Right lobe of liver (tissue), 6 donors: ENCODE measurements at regions of chr3 and their contacts with region 1.

Region 1: GRCh38 chr3:61947456-61947855 is 386.1 kb downstream of the PTPRG start:
- DNase-seq: no peak
- ATAC-seq: no peak
- H3K4me3 ChIP-seq: no peak overlapping the region
- H3K27ac ChIP-seq: no peak overlapping the region
- H3K4me1 ChIP-seq: no peaks in the 10 kb centered on the region
- H3K27me3 ChIP-seq: no peaks in the 10 kb centered on the region
- CTCF ChIP-seq: no peak
- POLR2A ChIP-seq: no peak

Region 2: GRCh38 chr3:61894988-61895935 is 52.2 kb before region 1 on chr3:
- intact Hi-C with region 1: no loop called
- DNase-seq: peak in 1 of 3 donors; percentile 30
- ATAC-seq: peak; percentile 21 to 83 (median 38)
- H3K4me3 ChIP-seq: no peak overlapping the region
- H3K27ac ChIP-seq: peak overlapping the region in 1 of 3 donors; percentile 20
- H3K4me1 ChIP-seq: peaks cover 0 to 36% (median 5%) of the 10 kb centered on the region in 4 donors
- H3K27me3 ChIP-seq: no peaks in the 10 kb centered on the region
- CTCF ChIP-seq: no peak
- POLR2A ChIP-seq: no peak

Region 3: GRCh38 chr3:62051507-62051906 is 104.1 kb after region 1 on chr3:
- intact Hi-C with region 1: loop called in 1 of 2 experiments (anchors 10 kb)
- DNase-seq: peak in 1 of 3 donors; percentile 31
- ATAC-seq: peak in 2 of 4 donors; percentile 32 to 45
- H3K4me3 ChIP-seq: no peak overlapping the region
- H3K27ac ChIP-seq: no peak overlapping the region
- H3K4me1 ChIP-seq: no peaks in the 10 kb centered on the region
- H3K27me3 ChIP-seq: no peaks in the 10 kb centered on the region
- CTCF ChIP-seq: peak in 3 of 4 donors; percentile 14 to 31 (median 23)
- POLR2A ChIP-seq: no peak

Region 4: DNA sequence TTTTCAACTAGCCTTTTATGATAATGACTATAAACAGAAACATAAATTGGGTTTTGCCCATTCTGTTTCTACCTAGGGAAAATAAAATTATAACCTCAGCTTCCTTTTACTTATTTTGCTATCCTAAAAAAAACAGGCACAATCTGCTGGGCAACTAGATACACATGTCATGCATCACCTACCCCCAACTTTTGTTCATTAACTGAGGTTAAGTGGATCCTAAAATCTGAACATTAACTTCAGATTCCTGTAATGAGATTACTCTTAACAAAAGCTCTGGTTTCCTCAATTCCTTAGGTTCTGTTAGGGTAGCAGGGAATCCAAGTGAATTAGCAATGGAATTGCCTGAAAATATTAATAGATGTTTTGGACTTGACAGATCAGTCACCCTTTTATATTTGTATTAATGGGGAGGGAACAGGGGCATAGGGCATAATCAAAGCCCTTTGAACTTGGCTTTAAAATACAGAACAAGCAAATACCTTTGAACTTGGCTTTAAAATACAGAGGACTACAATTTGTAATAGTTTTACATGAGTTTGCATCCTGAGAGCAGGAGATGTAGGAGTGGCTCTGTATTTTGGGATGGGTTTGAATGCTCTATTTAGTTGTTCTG is 319.3 kb after region 1 on chr3:
- intact Hi-C with region 1: no loop called
- DNase-seq: no peak
- ATAC-seq: peak; percentile 65 to 92 (median 86)
- H3K4me3 ChIP-seq: no peak overlapping the region
- H3K27ac ChIP-seq: peak overlapping the region in 2 of 3 donors; percentile 2 to 44
- H3K4me1 ChIP-seq: peaks cover 0 to 19% (median 4%) of the 10 kb centered on the region in 4 donors
- H3K27me3 ChIP-seq: no peaks in the 10 kb centered on the region
- CTCF ChIP-seq: no peak
- POLR2A ChIP-seq: no peak